Activated CD4-positive, alpha-beta memory T cell treated with anti-CD3 and anti-CD28 coated beads for 36 hours (primary cell): ENCODE measurements at regions of chr6 and their contacts with region 1.

Region 1: DNA sequence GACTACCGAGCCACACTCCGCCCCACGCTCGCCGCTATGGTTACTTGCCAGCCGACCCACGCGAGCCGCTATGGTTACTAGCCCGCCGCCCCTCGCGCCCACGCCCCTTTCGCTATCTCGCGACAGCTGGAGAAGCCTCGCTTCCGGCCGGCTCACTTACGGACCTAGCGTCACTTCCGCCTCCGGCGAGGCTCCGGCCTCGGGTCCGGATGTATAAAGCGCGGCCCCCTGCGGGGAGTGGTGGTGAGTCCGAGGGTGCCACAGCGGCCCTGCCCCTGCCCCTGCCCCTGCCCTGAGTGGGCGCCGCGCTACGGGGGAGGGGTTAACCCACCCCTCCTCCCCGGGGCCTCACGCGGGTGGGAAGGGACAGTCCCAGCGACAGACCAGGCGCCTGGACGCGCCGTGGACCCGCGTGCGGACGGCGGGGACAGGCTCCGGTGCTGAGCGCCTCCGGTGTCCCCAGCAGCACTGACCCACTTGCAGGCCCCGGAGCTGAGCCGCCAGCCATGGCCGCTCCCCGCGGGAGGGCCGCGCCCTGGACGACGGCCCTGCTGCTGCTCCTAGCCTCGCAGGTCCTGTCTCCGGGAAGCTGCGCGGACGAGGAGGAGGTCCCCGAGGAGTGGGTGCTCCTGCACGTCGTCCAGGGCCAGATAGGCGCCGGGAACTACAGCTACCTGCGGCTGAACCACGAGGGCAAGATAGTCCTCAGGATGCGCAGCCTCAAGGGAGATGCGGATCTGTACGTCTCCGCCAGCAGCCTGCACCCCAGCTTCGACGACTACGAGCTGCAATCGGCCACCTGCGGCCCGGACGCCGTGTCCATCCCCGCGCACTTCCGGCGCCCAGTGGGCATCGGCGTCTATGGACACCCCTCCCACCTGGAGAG is at the starts of genes C6orf120 and WDR27:
- DNase-seq: peak; percentile 99
- H3K4me3 Mint-ChIP-seq: peak within 1 kb of the TSS; percentile 89
- H3K27ac Mint-ChIP-seq: peak within 1 kb of the TSS; percentile 88
- H3K4me1 Mint-ChIP-seq: peaks cover 43% of the 10 kb centered on the region
- H3K27me3 Mint-ChIP-seq: no peaks in the 10 kb centered on the region
- total RNA-seq, gene C6orf120: 15.1 to 15.4 TPM
- total RNA-seq, gene WDR27: 39.7 to 41.6 TPM

Region 2: GRCh38 chr6:168895102-168895812 is 806.9 kb before region 1 on chr6:
- CTCF ChIA-PET with region 1: no interaction called
- POLR2A ChIA-PET with region 1: no interaction called
- intact Hi-C with region 1: loop called (anchors 10 kb)
- DNase-seq: peak; percentile 87
- H3K4me3 Mint-ChIP-seq: peak overlapping the region; percentile 30
- H3K27ac Mint-ChIP-seq: peak overlapping the region; percentile 68
- H3K4me1 Mint-ChIP-seq: peaks cover 15% of the 10 kb centered on the region
- H3K27me3 Mint-ChIP-seq: no peaks in the 10 kb centered on the region

Region 3: GRCh38 chr6:169723200-169723909 is 21.2 kb after region 1 on chr6:
- CTCF ChIA-PET with region 1: interaction called, 7 read pairs
- POLR2A ChIA-PET with region 1: interaction called, 49 read pairs
- intact Hi-C with region 1: loop called (anchors 1 kb)
- DNase-seq: peak; percentile 76
- H3K4me3 Mint-ChIP-seq: peak overlapping the region; percentile 98
- H3K27ac Mint-ChIP-seq: peak overlapping the region; percentile 100
- H3K4me1 Mint-ChIP-seq: peaks cover 42% of the 10 kb centered on the region
- H3K27me3 Mint-ChIP-seq: no peaks in the 10 kb centered on the region

Region 4: GRCh38 chr6:169990095-169991030 is 288.2 kb after region 1 on chr6:
- CTCF ChIA-PET with region 1: no interaction called
- POLR2A ChIA-PET with region 1: no interaction called
- intact Hi-C with region 1: loop called (anchors 2 kb)
- DNase-seq: peak; percentile 86
- H3K4me3 Mint-ChIP-seq: peak overlapping the region; percentile 52
- H3K27ac Mint-ChIP-seq: peak overlapping the region; percentile 75
- H3K4me1 Mint-ChIP-seq: peaks cover 25% of the 10 kb centered on the region
- H3K27me3 Mint-ChIP-seq: no peaks in the 10 kb centered on the region

Region 5: DNA sequence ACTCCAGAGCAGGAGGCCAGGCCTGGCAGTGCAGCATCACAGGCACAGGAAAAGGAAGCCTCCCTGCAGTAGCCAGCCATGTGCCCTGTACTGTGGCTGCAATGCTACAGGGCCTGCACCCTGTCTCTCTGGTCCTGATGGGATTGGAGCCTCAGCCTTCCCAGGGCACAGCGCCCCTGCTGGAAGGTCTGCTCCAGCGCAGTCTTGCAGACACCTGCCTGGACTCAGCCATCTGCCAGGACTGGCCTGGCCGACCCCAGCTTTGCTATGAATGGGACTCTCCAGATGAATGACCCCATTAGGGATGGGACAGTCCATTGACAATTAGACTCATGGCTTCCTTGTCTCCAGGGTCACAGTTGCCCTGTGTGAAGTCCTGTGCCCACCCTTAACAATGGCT is 300.8 kb after region 1 on chr6:
- CTCF ChIA-PET with region 1: no interaction called
- POLR2A ChIA-PET with region 1: no interaction called
- intact Hi-C with region 1: no loop called
- DNase-seq: no peak
- H3K4me3 Mint-ChIP-seq: no peak overlapping the region
- H3K27ac Mint-ChIP-seq: no peak overlapping the region
- H3K4me1 Mint-ChIP-seq: no peaks in the 10 kb centered on the region
- H3K27me3 Mint-ChIP-seq: no peaks in the 10 kb centered on the region

Region 6: DNA sequence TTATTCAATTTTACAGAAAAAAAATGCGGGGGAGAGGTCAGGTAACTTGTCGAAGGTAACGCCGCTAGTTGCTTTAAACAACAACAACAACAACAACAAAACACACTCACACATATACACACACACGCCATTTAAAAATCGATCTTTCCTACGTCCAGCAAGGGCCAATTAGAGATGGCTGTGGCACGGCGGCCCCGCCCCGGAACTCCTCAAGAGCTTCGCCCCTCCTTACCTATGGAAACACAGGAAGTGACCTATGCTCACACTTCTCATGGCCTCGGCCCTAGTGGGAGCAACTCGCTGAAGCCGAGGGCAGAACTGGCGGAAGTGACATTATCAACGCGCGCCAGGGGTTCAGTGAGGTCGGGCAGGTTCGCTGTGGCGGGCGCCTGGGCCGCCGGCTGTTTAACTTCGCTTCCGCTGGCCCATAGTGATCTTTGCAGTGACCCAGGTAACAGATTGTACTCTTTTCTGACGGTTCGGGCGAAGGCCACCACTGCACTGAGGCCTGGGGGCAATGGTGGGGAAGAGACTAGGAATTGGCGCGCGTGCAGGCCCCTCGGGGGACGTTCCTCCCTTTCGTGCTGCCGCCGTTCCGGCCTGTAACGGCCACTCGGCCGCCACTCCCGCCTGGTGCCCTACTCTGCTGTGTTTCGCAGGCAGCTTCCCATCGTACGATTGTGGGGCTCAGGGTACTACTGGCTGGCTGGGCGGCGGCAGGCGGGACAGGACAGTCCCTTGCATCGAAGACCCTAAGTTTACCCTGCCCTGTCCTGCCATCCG is 852.0 kb after region 1 on chr6 and contains the start of gene TBP:
- CTCF ChIA-PET with region 1: no interaction called
- POLR2A ChIA-PET with region 1: interaction called, 3 read pairs
- intact Hi-C with region 1: loop called (anchors 1 kb)
- DNase-seq: peak; percentile 99
- H3K4me3 Mint-ChIP-seq: no peak within 1 kb of the TSS
- H3K27ac Mint-ChIP-seq: no peak within 1 kb of the TSS
- H3K4me1 Mint-ChIP-seq: peaks cover 40% of the 10 kb centered on the region
- H3K27me3 Mint-ChIP-seq: no peaks in the 10 kb centered on the region
- total RNA-seq, gene TBP: 21.2 to 22.3 TPM